A549 (cell line): ENCODE measurements at regions of chr17 and their contacts with region 1.

Region 1: GRCh38 chr17:75238684-75239191 is 22.7 kb downstream of the GGA3 start:
- DNase-seq: peak; percentile 89 to 96
- ATAC-seq: peak; percentile 71 to 84
- H3K4me3 ChIP-seq: no peak overlapping the region
- H3K27ac ChIP-seq: no peak overlapping the region
- H3K4me1 ChIP-seq: 0 out of 3 replicates have a peak, but pooled peaks cover 6% of the 10 kb centered on the region
- CTCF ChIP-seq: peak; percentile 92
- EP300 ChIP-seq: no peak
- POLR2A ChIP-seq: no peak
- RAD21 ChIP-seq: peak; percentile 57 to 64

Region 2: DNA sequence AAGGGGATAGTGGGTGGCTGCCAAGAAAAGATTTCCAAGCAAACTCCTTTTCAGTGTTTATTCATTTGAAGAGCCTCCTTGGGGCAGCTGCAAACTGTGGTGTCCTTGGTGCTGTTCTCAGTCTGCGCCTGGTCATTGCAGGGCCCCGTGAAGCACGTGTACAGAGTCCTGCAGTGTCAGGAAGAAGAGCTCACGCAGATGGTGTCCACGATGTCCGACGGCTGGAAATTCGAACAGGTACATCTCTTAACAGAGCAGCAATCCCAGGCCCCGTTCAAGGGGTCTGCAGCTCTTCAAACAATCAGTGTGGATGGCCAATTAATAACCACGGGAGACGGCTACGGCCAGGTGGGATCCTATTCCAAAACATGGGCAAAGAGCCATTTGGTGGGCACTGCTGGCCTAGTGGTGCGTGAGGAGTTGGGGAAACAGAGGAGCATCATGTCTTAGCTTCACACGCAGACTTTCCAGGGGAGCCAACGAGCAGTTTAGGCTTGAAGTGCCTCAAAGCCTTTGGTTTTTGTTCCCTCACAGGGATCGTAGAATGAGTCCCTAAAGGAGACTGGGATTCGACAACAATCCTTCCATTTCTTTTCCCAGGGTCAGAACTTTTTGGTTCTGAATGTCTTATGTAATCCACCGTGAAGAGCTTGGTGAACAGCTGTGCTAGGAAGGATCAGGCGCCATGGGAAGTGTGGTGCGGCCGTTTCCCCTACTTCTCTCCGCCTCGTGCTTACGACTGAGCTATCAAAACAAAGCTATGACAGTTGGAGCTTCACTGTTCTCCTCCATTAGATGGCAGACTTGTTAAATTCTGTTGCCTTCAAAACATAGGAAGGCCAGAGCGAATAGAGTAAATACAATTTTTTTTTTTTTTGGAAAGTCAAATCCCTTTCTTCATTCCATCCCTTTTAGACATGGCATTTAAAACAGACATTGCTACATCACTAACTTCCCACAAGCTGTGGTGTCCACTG is 179.1 kb before region 1 on chr17:
- CTCF ChIA-PET with region 1: interaction called, 40 read pairs
- POLR2A ChIA-PET with region 1: no interaction called
- DNase-seq: peak in 1 of 2 experiments; percentile 70
- ATAC-seq: peak; percentile 77 to 85
- H3K4me3 ChIP-seq: no peak overlapping the region
- H3K27ac ChIP-seq: no peak overlapping the region
- H3K4me1 ChIP-seq: no peaks in the 10 kb centered on the region
- CTCF ChIP-seq: peak; percentile 62
- EP300 ChIP-seq: no peak
- POLR2A ChIP-seq: no peak
- RAD21 ChIP-seq: peak; percentile 62 to 71

Region 3: DNA sequence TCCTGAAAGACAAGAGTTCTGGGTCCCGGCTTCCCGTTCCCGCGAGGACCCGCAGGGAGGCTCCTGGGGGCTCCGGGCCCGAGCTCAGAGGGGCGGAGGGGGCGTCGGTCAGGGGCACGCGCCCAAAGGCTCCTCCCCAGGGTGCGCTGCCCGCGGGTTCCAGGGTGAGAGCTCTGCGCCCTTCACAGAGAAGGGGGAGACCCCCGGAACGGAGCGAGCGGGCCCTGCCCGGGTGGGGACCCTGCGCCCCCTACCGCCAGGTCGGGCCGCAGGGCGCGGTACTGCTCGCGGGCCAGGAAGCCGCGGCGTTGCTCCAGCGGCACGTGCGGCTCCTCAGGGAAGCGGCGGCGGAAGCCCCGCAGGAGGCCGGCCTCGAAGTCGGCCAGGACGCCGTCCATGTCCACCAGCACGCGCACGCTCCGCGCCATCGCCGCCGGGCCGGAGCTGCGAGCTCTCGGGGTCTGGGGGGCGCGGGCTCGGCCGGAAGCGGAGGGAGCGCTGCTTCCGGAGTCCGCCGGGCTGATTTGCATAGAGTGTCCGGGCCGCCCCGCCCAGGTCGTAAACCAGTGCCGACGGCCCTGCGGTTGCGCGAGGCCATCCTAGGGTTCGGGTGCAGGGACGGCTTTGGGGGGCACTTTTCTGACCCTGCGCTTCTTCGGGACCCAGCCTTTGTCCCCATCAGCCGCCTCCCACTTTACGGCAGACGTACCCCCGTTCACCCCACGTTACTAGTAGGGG is 107.3 kb before region 1 on chr17 and contains the start of gene NT5C:
- CTCF ChIA-PET with region 1: interaction called, 13 read pairs
- POLR2A ChIA-PET with region 1: no interaction called
- DNase-seq: peak; percentile 85 to 91
- ATAC-seq: peak; percentile 83 to 86
- H3K4me3 ChIP-seq: peak within 1 kb of the TSS; percentile 89
- H3K27ac ChIP-seq: peak within 1 kb of the TSS; percentile 97
- H3K4me1 ChIP-seq: peaks cover 40% of the 10 kb centered on the region
- CTCF ChIP-seq: peak; percentile 95
- EP300 ChIP-seq: no peak
- POLR2A ChIP-seq: peak; percentile 72
- RAD21 ChIP-seq: peak; percentile 58 to 77
- polyA plus RNA-seq, gene NT5C: 54.5 and 73.7 TPM in 2 replicates

Region 4: GRCh38 chr17:75228305-75228704 is 10.4 kb before region 1 on chr17:
- CTCF ChIA-PET with region 1: interaction called, 223 read pairs
- POLR2A ChIA-PET with region 1: interaction called, 3 read pairs
- DNase-seq: no peak
- ATAC-seq: no peak
- H3K4me3 ChIP-seq: no peak overlapping the region
- H3K27ac ChIP-seq: no peak overlapping the region
- H3K4me1 ChIP-seq: no peaks in the 10 kb centered on the region
- CTCF ChIP-seq: no peak
- EP300 ChIP-seq: no peak
- POLR2A ChIP-seq: no peak
- RAD21 ChIP-seq: no peak

Region 5: DNA sequence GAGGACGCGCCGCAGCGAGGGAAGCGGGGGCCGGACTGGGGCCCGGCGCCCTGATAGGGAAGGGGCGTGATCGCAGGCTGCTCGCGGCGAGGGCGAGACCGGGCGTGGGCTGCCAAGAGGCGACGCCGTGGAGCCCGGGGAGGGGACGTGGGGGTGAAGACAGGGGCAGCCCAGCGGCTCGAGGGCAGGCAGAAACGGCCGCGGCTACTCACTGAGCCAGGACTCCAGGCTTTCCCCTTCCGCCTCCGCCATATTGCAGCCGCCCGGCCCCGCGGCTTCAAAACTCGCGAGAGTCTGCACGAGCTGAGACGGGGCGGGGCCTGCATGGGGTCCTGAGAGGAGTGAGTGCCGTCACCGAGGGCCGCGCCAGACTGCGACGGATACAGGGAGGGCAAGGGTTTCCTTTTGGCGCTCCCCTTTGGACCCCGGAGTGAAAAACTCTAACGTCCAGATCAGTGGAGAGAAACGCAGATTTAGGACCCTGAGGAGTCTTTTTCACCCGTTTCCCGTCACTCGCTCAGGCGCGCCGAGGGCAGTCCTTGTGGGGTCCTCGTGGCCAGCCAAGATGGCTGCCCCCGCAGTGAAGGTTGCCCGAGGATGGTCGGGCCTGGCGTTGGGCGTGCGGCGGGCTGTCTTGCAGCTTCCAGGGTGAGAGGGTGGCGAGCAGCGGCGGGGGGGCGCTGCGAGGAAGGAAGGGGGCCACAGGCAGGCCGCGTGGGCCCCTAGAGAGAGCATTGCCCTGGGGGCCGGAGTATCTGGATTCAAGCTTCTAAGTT is 22.8 kb after region 1 on chr17 and contains the starts of genes GGA3 and MRPS7:
- CTCF ChIA-PET with region 1: interaction called, 64 read pairs
- POLR2A ChIA-PET with region 1: interaction called, 13 read pairs
- DNase-seq: peak; percentile 95 to 96
- ATAC-seq: peak; percentile 96 to 97
- H3K4me3 ChIP-seq: peak within 1 kb of the TSS; percentile 97
- H3K27ac ChIP-seq: peak within 1 kb of the TSS; percentile 96
- H3K4me1 ChIP-seq: peaks cover 22% of the 10 kb centered on the region
- CTCF ChIP-seq: no peak
- EP300 ChIP-seq: no peak
- POLR2A ChIP-seq: peak; percentile 91
- RAD21 ChIP-seq: no peak
- polyA plus RNA-seq, gene GGA3: 40.9 and 43.6 TPM in 2 replicates
- polyA plus RNA-seq, gene MRPS7: 144 and 157 TPM in 2 replicates